Endothelial cell of umbilical vein (primary cell): ENCODE measurements at regions of chr9 and their contacts with region 1.

Region 1: GRCh38 chr9:127578955-127579853 is 32.9 kb upstream of the STXBP1 start:
- DNase-seq: peak; percentile 98
- H3K4me3 ChIP-seq: peak overlapping the region in 2 of 3 experiments; percentile 31 to 49
- H3K27ac ChIP-seq: peak overlapping the region; percentile 95
- H3K4me1 ChIP-seq: peaks cover 19% of the 10 kb centered on the region
- H3K27me3 ChIP-seq: no peaks in the 10 kb centered on the region
- CTCF ChIP-seq: peak; percentile 21 to 51
- POLR2A ChIP-seq: peak; percentile 90

Region 2: DNA sequence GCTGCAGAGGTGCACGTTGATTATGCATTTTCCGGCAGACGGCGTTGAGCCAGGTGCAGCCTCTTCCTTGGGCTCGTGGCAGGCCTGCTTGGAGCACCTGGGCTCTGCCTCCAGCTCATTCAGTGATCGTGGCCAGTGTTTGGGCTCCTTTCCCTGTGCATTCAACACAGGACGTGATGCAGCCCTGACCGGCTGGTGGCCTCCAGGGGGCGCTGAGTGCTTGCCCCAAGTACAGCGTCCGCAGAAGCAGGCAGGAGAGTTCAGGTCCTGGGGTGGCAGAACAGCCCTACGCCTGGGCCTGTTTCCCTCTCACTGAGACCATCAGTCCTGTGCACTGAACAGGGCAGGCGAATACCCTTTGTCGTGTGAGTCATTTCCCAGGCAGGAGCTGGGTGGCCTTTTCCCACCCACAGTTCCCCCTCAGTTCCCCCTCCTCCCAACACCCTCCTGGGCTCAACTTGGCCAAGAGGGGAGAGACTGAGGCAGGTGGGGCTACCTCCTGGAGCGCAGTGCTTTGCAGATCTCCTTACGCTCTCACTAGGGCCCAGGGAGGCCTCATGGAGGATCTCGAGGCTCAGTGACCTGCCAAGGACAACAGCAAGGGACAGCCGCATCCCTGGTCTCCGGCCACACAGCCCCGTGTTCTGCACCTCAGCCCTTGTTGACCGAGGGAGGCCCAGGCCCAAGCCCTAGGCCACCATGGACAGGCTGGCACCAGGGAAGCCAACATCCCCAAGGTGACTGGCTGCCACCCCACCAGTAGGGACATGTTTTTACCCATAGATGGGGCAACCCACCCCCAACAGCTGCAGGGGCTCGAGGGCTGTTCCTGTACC is 75.0 kb before region 1 on chr9:
- CTCF ChIA-PET with region 1: interaction called, 96 read pairs
- POLR2A ChIA-PET with region 1: interaction called, 5 read pairs
- dilution Hi-C with region 1: no loop called
- intact Hi-C with region 1: loop called (anchors 2 kb)
- DNase-seq: peak; percentile 75
- H3K4me3 ChIP-seq: no peak overlapping the region
- H3K27ac ChIP-seq: no peak overlapping the region
- H3K4me1 ChIP-seq: no peaks in the 10 kb centered on the region
- H3K27me3 ChIP-seq: no peaks in the 10 kb centered on the region
- CTCF ChIP-seq: peak; percentile 86 to 98
- POLR2A ChIP-seq: no peak

Region 3: DNA sequence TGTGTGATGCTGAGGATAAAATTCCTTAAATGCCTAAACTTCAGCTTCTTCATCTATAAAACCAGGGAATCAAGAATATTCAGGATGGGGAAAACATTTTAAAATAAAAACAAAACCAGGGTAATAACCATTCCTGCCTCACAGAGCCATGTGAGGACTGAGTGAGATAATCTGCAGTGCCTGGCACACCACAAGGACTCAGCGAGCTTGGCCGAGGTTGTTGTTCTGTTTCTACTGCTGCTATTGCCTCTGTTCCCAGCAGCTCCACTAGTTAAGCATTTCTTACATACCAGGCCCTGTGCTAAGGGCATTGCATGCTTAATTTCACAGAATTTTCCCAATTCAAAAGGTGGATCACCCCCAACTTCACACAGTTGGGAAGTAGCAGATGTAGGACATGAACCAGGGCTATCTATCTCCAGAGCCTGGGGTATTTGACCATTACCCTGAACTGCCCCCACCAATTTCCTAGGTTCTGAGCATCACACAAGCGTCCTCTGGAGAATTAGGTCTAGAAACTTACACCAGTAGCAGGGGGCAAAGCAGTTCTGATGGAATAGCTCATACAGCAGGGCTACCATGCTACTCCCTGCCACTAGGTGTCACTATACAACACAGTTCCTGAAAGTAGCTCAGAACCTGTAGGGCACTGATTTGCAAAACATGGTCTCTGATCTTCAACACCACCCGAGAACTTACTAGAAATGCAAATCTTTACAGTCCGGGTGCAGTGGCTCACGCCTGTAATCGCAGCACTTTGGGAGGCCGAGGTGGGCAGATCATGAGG is 53.6 kb before region 1 on chr9:
- CTCF ChIA-PET with region 1: interaction called, 53 read pairs
- POLR2A ChIA-PET with region 1: interaction called, 4 read pairs
- dilution Hi-C with region 1: no loop called
- intact Hi-C with region 1: loop called (anchors 1 kb)
- DNase-seq: no peak
- H3K4me3 ChIP-seq: no peak overlapping the region
- H3K27ac ChIP-seq: no peak overlapping the region
- H3K4me1 ChIP-seq: peaks cover 51% of the 10 kb centered on the region
- H3K27me3 ChIP-seq: no peaks in the 10 kb centered on the region
- CTCF ChIP-seq: peak; percentile 53 to 55
- POLR2A ChIP-seq: no peak

Region 4: DNA sequence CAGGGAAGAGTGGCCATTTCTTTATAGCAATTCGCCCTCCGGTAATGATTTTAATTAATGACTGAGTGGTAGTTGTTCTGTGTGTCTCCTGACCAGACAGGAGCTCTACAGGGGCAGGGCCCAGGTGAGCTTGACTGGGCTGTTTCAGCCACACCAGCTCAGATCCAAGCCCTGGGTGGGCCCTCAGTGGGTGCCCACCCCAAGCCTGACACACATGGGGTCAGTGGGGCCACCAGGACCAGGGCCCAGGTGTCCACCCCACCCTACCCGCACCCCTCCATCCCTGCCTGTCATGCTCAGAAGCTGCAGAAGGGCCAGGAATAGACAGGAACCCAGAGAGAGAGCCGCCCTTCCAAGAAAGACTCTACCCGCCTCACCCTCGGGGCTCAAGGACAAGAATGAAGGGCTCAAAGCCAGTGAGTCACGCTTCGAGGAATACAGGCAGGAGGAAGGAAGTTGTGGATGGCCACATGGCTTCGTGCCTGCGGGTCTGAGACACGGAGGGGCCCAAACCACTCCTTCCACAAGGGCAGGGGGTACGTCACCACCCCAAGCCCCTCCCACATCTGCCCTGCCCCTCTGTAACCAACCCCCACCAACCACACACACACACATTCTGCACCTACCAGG is 23.3 kb before region 1 on chr9:
- CTCF ChIA-PET with region 1: interaction called, 9 read pairs
- POLR2A ChIA-PET with region 1: interaction called, 8 read pairs
- dilution Hi-C with region 1: no loop called
- intact Hi-C with region 1: loop called (anchors 1 kb)
- DNase-seq: peak; percentile 93
- H3K4me3 ChIP-seq: no peak overlapping the region
- H3K27ac ChIP-seq: peak overlapping the region; percentile 95
- H3K4me1 ChIP-seq: peaks cover 56% of the 10 kb centered on the region
- H3K27me3 ChIP-seq: no peaks in the 10 kb centered on the region
- CTCF ChIP-seq: no peak
- POLR2A ChIP-seq: peak; percentile 51